Dorsolateral prefrontal cortex (tissue), 120 donors: ENCODE measurements at regions of chr6 and their contacts with region 1.

Region 1: GRCh38 chr6:90393232-90393884 is 96.7 kb upstream of the BACH2 start:
- DNase-seq: peak in 6 of 10 donors; percentile 32 to 62 (median 54)
- H3K4me3 ChIP-seq: peak overlapping the region in 1 of 59 donors; percentile 20
- H3K27ac ChIP-seq: no peak overlapping the region
- H3K27me3 ChIP-seq: no peaks in the 10 kb centered on the region
- CTCF ChIP-seq: peak; percentile 62 to 88 (median 79)

Region 2: DNA sequence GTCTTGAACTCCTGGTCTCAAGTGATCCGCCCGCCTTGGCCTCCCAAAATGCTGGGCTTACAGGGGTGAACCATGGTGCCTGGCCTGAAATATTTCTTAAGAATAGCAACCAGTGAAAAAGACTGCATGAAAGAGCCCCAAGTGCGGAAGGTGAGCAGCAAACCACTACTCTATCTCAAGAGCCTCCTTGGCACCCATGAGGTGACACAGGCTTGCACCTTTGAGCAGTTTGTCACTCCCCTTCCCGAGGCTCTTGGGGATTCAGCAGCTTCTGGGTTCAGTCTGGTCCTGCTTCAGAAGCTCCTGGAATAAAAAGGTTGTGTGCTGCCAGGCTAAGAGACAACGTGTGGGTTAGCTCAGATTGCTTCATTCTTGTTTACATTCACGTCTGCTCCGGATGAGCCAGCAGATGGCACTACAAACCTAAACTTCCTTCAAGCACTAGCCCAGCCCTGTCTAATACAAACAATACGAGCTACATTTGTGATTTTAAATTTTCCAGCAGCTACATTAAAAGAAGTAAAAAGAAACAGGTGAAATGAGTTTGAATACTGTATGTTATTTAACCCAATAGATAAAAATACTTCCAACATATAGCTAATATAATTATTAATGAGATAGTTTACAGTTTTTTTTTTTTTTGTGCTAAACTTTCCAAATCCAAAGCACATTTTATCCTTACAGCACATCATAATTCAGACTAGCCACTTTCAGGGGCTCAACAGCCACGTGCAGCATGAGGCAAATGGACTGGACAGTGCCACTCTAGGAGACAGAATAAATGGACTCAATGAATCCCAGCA is 452.9 kb before region 1 on chr6:
- intact Hi-C with region 1: loop called in 1 of 2 experiments (anchors 5 kb)
- DNase-seq: peak; percentile 44 to 92 (median 80)
- H3K4me3 ChIP-seq: peak overlapping the region in 27 of 59 donors; percentile 2 to 47 (median 30)
- H3K27ac ChIP-seq: peak overlapping the region in 58 of 59 donors; percentile 22 to 92 (median 84)
- H3K27me3 ChIP-seq: no peaks in the 10 kb centered on the region
- CTCF ChIP-seq: peak; percentile 23 to 92 (median 81)

Region 3: DNA sequence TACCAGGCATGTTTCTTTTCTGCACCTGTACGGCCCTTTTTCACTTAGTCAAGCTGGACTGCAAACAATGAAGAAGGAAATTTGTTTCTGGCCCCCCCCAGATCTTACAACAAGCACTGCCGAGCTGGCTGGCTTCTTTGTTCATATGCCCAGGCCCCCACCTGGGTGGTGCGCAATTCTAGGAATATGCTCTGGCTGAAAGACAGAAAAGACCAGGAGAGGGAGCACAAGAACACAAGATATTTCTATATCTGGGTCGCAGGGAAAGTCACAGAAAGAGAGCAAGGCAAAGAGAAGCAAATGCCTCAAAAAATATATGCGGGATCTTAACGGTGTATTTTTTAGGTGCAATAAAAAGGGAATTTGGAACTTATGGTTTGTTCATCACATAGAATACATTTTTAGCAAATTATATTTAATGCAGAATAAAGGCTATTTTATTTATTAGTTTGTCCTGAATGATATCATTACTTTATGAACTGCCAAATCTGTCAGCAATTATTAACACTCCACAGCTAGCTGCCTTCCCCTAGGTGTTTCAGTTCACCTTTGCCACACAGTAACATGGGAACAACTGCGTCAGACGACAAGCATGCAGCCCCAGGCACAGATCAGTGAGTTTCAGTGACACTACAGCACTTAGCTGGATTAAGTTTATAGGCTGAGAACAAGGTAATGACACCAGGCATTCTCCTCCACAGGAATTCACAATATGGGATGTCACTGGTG is 422.6 kb before region 1 on chr6:
- intact Hi-C with region 1: loop called (anchors 5 kb)
- DNase-seq: peak in 7 of 10 donors; percentile 53 to 81 (median 57)
- H3K4me3 ChIP-seq: peak overlapping the region in 3 of 59 donors; percentile 1 to 20 (median 2)
- H3K27ac ChIP-seq: peak overlapping the region in 12 of 59 donors; percentile 10 to 65 (median 19)
- H3K27me3 ChIP-seq: no peaks in the 10 kb centered on the region
- CTCF ChIP-seq: peak; percentile 21 to 83 (median 70)

Region 4: DNA sequence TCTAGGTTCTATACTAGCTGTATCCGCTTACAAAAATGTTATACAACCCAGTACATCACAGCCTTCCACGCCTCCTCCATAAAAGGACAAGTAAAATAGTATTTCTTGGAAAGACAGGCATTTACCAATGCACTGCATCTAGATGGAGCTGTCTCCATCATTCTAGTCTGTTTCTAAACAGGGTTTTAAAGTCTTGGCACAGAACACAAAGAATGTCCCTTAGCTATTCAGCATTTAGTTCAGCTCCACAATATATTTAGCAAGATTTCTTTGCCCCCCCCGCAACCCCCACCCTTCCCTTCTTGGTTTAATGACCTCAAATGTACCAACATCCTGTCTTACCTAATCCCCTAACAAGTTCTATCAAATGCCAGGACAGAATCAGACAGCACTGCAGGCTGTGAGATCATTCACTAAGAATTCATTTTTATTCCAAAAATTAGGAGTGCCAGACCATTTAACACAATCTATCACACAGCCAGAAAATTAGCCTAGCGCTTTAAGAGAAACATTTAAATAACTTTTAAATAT is 295.3 kb before region 1 on chr6:
- intact Hi-C with region 1: loop called in 1 of 2 experiments (anchors 10 kb)
- DNase-seq: peak in 1 of 10 donors; percentile 24
- H3K4me3 ChIP-seq: peak overlapping the region in 7 of 59 donors; percentile 1 to 32 (median 18)
- H3K27ac ChIP-seq: peak overlapping the region in 24 of 59 donors; percentile 1 to 70 (median 30)
- H3K27me3 ChIP-seq: no peaks in the 10 kb centered on the region
- CTCF ChIP-seq: peak in 55 of 56 donors; percentile 23 to 74 (median 56)